ENCODE measurements at regions of chr3 and their contacts with region 1.

Region 1: DNA sequence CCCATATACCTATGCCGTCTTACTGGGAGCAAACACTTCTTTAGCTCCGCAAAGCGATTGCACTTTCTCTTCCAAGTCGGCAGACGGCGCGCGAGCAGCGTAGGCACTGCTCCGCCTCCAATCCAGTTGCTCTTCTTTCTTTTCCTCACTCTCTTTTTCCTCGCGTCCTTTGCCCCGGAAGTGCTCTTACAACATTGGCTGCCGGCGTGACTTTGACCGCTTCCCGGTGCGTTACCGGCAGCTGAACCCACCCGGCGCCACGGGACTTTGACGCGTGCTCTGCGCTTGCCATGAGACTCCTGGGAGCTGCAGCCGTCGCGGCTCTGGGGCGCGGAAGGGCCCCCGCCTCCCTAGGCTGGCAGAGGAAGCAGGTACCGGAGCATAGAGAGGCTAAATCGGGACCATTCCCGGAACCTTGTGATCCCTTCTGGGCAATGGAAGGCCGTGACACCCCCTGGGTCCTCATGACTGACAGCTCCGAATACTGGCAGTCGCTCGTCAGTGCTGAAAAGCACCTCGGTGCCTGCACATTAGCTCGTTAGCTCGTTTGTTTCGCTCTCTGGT is at the start of gene GFM1:
- DNase-seq: peak; percentile 94
- ATAC-seq: peak; percentile 97
- H3K4me3 Mint-ChIP-seq: peak within 1 kb of the TSS; percentile 99
- H3K27ac Mint-ChIP-seq: peak within 1 kb of the TSS; percentile 96
- H3K4me1 Mint-ChIP-seq: peaks cover 37% of the 10 kb centered on the region
- H3K27me3 Mint-ChIP-seq: no peaks in the 10 kb centered on the region
- CTCF ChIP-seq: peak; percentile 79
- total RNA-seq, gene GFM1: 48.4 to 56.1 TPM

Region 2: DNA sequence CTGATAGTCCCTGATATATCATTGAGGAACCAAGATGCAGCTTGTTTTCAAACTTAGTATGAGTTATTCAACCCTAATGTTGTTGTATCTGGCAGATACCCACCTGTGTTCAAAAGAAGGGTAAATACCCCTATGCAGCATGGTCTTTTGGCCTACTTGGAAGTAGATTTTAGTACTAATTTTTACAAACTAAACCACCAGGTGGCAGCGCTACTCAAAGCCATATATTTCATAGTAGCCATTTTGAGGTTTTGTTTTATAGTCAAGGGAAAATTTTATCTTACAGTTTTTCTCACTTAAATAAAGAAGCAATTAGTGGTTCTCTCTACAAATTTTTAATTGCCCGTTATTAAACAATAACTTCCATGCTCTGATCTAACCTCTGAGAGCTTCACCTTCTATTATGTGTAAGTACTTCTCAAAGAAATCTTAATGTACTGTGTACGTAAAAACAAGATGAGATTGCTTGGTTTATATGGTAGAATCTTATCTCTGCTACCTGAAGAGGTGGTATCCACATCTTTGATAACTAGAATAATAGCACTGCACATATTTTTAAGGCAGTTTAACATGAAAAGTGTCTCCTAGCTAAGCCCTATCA is 104.9 kb before region 1 on chr3:
- CTCF ChIA-PET with region 1: interaction called, 8 read pairs
- POLR2A ChIA-PET with region 1: no interaction called
- intact Hi-C with region 1: loop called (anchors 5 kb)
- DNase-seq: peak; percentile 68
- ATAC-seq: peak; percentile 65
- H3K4me3 Mint-ChIP-seq: no peak overlapping the region
- H3K27ac Mint-ChIP-seq: no peak overlapping the region
- H3K4me1 Mint-ChIP-seq: no peaks in the 10 kb centered on the region
- H3K27me3 Mint-ChIP-seq: no peaks in the 10 kb centered on the region
- CTCF ChIP-seq: peak; percentile 72

Region 3: GRCh38 chr3:158672293-158673176 is 28.1 kb after region 1 on chr3 and contains the start of gene LXN:
- CTCF ChIA-PET with region 1: interaction called, 15 read pairs
- POLR2A ChIA-PET with region 1: interaction called, 3 read pairs
- intact Hi-C with region 1: no loop called
- DNase-seq: peak; percentile 86
- ATAC-seq: peak; percentile 99
- H3K4me3 Mint-ChIP-seq: peak within 1 kb of the TSS; percentile 84
- H3K27ac Mint-ChIP-seq: peak within 1 kb of the TSS; percentile 75
- H3K4me1 Mint-ChIP-seq: peaks cover 22% of the 10 kb centered on the region
- H3K27me3 Mint-ChIP-seq: no peaks in the 10 kb centered on the region
- CTCF ChIP-seq: peak; percentile 44
- total RNA-seq, gene LXN: 7.1 to 7.8 TPM

Region 4: GRCh38 chr3:158801696-158802408 is 157.4 kb after region 1 on chr3 and contains the start of gene MFSD1:
- CTCF ChIA-PET with region 1: interaction called, 12 read pairs
- POLR2A ChIA-PET with region 1: interaction called, 4 read pairs
- intact Hi-C with region 1: no loop called
- DNase-seq: peak; percentile 94
- ATAC-seq: peak; percentile 94
- H3K4me3 Mint-ChIP-seq: peak within 1 kb of the TSS; percentile 83
- H3K27ac Mint-ChIP-seq: peak within 1 kb of the TSS; percentile 66
- H3K4me1 Mint-ChIP-seq: peaks cover 20% of the 10 kb centered on the region
- H3K27me3 Mint-ChIP-seq: no peaks in the 10 kb centered on the region
- CTCF ChIP-seq: no peak
- total RNA-seq, gene MFSD1: 9.2 to 9.7 TPM

Measured in activated CD8-positive, alpha-beta T cell treated with anti-CD3 and anti-CD28 coated beads for 36 hours (primary cell).